B cell (primary cell): ENCODE measurements at regions of chr13 and their contacts with region 1.

Region 1: GRCh38 chr13:78897200-78897599 is 238.2 kb upstream of the OBI1 start:
- DNase-seq: no peak
- ATAC-seq: no peak
- H3K4me3 ChIP-seq: no peak overlapping the region
- H3K4me3 Mint-ChIP-seq: no peak overlapping the region
- H3K27ac ChIP-seq: no peak overlapping the region
- H3K27ac Mint-ChIP-seq: no peak overlapping the region
- H3K4me1 ChIP-seq: no peaks in the 10 kb centered on the region
- H3K4me1 Mint-ChIP-seq: no peaks in the 10 kb centered on the region
- H3K27me3 ChIP-seq: peaks cover 0 to 2% (median 0%) of the 10 kb centered on the region in 4 experiments
- H3K27me3 Mint-ChIP-seq: peaks cover 20% of the 10 kb centered on the region
- CTCF ChIP-seq: no peak

Region 2: GRCh38 chr13:78476910-78477309 is 420.3 kb before region 1 on chr13:
- CTCF ChIA-PET with region 1: no interaction called
- POLR2A ChIA-PET with region 1: no interaction called
- intact Hi-C with region 1: no loop called
- DNase-seq: no peak
- ATAC-seq: no peak
- H3K4me3 ChIP-seq: no peak overlapping the region
- H3K4me3 Mint-ChIP-seq: no peak overlapping the region
- H3K27ac ChIP-seq: no peak overlapping the region
- H3K27ac Mint-ChIP-seq: no peak overlapping the region
- H3K4me1 ChIP-seq: no peaks in the 10 kb centered on the region
- H3K4me1 Mint-ChIP-seq: no peaks in the 10 kb centered on the region
- H3K27me3 ChIP-seq: no peaks in the 10 kb centered on the region
- H3K27me3 Mint-ChIP-seq: no peaks in the 10 kb centered on the region
- CTCF ChIP-seq: no peak

Region 3: DNA sequence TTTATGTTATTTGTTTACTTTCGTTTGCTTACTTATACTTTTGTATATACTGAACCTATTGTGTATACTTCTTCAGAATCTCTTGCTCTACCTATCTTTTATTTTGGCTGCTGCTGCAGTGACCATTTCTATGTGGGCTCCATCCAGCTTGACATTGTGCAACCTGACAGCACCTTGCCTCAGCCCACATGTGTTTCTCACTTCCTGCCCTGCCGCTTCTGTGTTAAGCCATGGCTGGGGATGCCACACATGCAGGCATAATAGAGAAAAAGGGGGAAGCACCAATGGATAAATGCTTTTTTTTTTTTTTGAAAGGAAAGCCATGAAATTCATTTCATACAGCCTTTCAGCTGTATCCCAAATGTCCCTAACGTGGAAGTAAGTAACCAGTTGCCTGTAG is 361.3 kb after region 1 on chr13:
- CTCF ChIA-PET with region 1: no interaction called
- POLR2A ChIA-PET with region 1: no interaction called
- intact Hi-C with region 1: loop called (anchors 10 kb)
- DNase-seq: no peak
- ATAC-seq: no peak
- H3K4me3 ChIP-seq: no peak overlapping the region
- H3K4me3 Mint-ChIP-seq: no peak overlapping the region
- H3K27ac ChIP-seq: no peak overlapping the region
- H3K27ac Mint-ChIP-seq: no peak overlapping the region
- H3K4me1 ChIP-seq: no peaks in the 10 kb centered on the region
- H3K4me1 Mint-ChIP-seq: no peaks in the 10 kb centered on the region
- H3K27me3 ChIP-seq: no peaks in the 10 kb centered on the region
- H3K27me3 Mint-ChIP-seq: no peaks in the 10 kb centered on the region
- CTCF ChIP-seq: no peak